CD8-positive, alpha-beta T cell (primary cell): ENCODE measurements at regions of chr12 and their contacts with region 1.

Region 1: DNA sequence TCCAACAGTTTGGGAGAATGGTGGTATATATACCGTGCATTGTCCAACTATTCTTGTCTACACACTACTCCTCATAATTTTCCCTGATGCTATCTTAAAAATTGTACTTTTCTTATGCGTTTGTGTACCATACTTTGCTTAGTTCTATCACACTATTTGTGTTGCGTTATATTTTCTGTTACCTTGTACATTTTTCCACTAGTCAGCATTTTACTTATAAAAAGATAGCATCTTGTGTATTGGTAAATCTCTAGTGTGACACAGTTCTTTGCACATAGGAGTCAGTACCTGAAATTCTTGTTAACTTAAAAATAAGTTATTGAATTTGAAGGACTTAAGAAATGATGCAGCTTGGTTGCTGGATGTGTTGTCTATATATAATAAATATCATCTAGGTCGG is 201.8 kb upstream of the LMO3 start:
- DNase-seq: no peak
- ATAC-seq: no peak
- H3K4me3 ChIP-seq: no peak overlapping the region
- H3K4me3 Mint-ChIP-seq: no peak overlapping the region
- H3K27ac ChIP-seq: no peak overlapping the region
- H3K27ac Mint-ChIP-seq: no peak overlapping the region
- H3K4me1 ChIP-seq: no peaks in the 10 kb centered on the region
- H3K4me1 Mint-ChIP-seq: no peaks in the 10 kb centered on the region
- H3K27me3 ChIP-seq: no peaks in the 10 kb centered on the region
- H3K27me3 Mint-ChIP-seq: no peaks in the 10 kb centered on the region
- CTCF ChIP-seq: no peak

Region 2: DNA sequence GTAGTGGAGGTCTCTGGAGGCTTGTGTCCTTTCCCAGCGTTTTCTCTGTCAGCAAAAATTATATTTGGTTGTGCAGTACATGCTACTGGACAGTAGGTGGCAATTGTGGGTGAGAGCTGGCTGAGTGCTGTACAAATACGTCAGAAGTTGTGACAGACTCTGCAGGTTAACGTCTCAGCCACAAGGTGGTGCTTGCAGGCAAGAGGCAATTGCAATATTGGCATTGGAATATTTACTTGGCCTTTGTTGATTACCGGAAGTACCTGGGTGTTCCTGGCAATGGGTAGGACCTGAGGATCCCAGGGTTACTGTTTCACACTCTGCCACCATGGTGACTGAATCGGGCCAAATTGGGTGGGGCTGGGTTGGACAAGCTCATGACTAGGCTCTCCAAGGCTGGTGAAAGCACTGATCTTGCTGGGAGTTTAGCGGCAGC is 132.2 kb after region 1 on chr12:
- CTCF ChIA-PET with region 1: no interaction called
- POLR2A ChIA-PET with region 1: no interaction called
- intact Hi-C with region 1: loop called in 1 of 2 experiments (anchors 10 kb)
- DNase-seq: no peak
- ATAC-seq: no peak
- H3K4me3 ChIP-seq: no peak overlapping the region
- H3K4me3 Mint-ChIP-seq: no peak overlapping the region
- H3K27ac ChIP-seq: no peak overlapping the region
- H3K27ac Mint-ChIP-seq: no peak overlapping the region
- H3K4me1 ChIP-seq: no peaks in the 10 kb centered on the region
- H3K4me1 Mint-ChIP-seq: no peaks in the 10 kb centered on the region
- H3K27me3 ChIP-seq: no peaks in the 10 kb centered on the region
- H3K27me3 Mint-ChIP-seq: no peaks in the 10 kb centered on the region
- CTCF ChIP-seq: no peak